ENCODE measurements at regions of chr14 and their contacts with region 1.

Region 1: DNA sequence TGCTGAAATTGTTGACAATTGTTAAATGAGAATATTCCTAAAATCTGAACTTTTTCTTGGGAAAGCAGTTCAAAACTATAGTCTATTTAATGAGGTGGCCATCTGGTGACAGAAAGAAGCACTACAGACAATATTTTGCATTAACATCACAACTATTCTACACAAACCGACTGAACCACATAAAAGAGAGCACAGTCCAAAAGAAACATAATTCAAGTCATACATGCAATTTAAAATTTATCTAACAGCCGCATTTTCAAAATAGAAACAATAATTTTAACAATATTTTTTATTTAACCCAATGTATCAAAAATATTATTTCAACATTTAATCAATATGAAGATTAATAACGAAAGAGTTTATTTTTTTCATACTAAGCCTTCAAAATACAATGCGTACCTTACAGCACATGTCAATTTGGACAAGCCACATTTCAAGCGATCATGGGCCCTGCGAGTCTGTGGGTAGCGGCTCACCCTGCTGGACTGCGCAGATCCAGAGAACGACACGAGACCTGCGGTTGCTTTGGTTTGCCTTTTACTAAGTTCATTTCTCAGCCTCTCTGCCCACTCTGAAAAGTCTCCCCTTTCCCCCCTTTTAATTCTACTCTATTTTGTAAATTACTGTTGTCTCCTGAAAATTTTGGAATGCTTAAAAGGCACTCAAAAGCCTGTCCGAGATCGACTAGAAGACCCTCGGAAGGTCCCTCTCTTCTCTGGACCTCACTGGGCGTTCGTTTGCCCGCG is 947 bp upstream of the LRRC9 start:
- DNase-seq: peak; percentile 58
- H3K4me3 Mint-ChIP-seq: peak overlapping the region; percentile 57
- H3K27ac Mint-ChIP-seq: no peak overlapping the region
- H3K4me1 Mint-ChIP-seq: peaks cover 4% of the 10 kb centered on the region
- H3K27me3 Mint-ChIP-seq: peaks cover 45% of the 10 kb centered on the region

Region 2: DNA sequence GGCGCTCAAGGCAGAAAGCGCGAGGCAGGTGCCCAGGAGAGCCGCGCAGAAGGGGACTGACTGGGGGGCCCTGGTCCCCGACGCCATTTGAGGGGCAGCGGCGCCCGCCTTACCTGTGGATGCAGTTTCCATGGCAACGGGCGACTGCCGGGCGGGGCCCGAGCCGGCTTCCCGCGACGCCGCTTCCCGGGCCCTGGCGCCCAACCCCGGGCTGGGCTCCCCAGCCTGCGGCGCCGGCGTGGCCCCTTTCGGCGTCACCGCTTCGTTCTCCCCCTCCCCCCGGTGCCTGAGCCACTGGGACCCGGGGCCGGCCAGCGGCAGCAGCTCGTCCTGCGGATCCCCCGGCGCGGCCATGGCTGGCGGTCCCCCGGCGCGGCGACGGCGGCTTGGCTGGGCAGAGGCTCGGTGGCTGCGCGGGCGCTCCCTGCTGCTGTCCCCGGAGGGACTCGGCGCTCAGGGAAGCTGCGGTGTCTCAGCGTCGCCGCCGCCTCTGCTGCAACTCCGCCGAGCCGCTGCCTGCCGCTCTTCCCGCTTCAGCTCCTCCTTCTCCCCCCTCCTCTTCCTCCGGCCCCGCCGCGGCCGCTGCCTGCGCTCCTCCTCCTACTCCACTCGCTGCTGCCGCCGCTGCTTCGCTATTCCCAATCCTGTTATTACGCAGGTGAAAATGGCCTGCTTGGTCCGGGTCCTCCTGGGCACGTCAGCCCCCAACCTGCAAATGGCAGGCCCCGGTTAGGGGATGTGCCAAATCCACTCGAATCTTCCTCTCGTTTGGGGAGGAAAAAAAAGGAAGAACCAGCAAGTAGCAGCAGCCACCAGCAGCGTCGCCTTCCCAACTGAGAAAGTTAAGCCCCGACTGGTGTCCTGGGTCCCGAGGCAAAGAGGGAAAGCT is 48.5 kb before region 1 on chr14 and contains the start of gene RTN1:
- intact Hi-C with region 1: loop called (anchors 1 kb)
- DNase-seq: peak; percentile 71
- H3K4me3 Mint-ChIP-seq: peak within 1 kb of the TSS; percentile 81
- H3K27ac Mint-ChIP-seq: no peak within 1 kb of the TSS
- H3K4me1 Mint-ChIP-seq: peaks cover 7% of the 10 kb centered on the region
- H3K27me3 Mint-ChIP-seq: peaks cover 52% of the 10 kb centered on the region
- total RNA-seq, gene RTN1: not detected in 2 replicates

Measured in activated CD4-positive, alpha-beta T cell treated with anti-CD3 and anti-CD28 coated beads, Interleukin-2, amount 10 ng/mL, durations not matched to agents 24 days and 14 days (primary cell).